Activated CD4-positive, alpha-beta memory T cell treated with anti-CD3 and anti-CD28 coated beads for 36 hours (primary cell): ENCODE measurements at regions of chr2 and their contacts with region 1.

Region 1: DNA sequence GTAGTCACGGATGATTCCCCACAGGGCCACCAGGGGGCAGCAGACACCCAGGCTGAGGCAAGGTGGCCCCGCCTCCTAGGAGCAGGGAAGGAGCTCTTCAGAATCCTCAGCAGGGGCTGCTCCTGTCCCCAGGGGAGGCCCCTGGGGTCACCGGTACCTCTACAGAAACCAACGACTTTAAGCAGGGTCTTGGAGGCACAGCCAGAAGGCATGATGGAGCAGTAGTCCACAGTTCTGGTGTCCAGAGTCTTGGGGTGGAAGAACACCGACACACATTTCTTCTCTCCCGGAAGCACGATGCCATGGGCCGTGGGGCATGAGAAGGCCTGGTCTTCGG is 11.5 kb downstream of the CFAP65 start:
- DNase-seq: peak; percentile 85
- H3K4me3 Mint-ChIP-seq: no peak overlapping the region
- H3K27ac Mint-ChIP-seq: no peak overlapping the region
- H3K4me1 Mint-ChIP-seq: no peaks in the 10 kb centered on the region
- H3K27me3 Mint-ChIP-seq: peaks cover 20% of the 10 kb centered on the region

Region 2: DNA sequence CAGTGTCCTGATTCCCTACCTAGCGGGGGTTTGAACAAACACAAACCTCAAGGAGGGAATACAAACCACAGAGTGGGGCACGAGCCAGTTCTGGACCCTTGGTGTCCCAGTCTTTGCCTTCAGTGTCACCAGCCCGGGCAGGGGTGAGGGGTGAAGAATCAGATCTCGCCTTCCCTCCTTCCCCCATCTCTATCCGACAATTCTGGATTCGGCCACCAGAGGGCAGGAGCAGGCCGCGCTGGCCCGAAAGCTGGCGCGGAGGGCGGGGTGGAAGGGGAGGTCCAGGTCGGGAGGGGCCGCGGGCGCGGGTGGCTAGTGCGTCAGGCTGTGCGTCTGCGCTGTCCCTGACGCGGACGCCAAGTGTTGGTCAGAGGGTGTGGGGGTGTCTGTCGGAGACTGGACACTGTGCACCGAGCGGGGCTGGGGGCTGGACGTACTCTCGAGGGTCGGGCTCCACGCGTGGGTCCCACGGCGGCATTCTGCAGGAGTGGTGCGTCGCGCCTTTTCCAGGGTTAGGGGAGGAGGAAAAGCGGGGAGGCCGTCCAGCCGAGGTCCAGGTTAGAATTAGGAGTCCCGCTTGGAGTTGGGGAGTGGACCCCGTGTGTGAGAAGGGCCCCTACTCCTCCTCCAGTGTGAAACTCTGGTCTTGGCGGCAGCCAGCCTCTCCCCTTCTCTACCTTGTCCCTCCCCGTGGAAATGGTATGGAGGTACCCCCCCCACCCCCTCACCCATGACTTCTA is 33.7 kb before region 1 on chr2:
- CTCF ChIA-PET with region 1: interaction called, 13 read pairs
- POLR2A ChIA-PET with region 1: interaction called, 3 read pairs
- intact Hi-C with region 1: no loop called
- DNase-seq: peak; percentile 86
- H3K4me3 Mint-ChIP-seq: no peak overlapping the region
- H3K27ac Mint-ChIP-seq: no peak overlapping the region
- H3K4me1 Mint-ChIP-seq: peaks cover 2% of the 10 kb centered on the region
- H3K27me3 Mint-ChIP-seq: peaks cover 73% of the 10 kb centered on the region

Region 3: DNA sequence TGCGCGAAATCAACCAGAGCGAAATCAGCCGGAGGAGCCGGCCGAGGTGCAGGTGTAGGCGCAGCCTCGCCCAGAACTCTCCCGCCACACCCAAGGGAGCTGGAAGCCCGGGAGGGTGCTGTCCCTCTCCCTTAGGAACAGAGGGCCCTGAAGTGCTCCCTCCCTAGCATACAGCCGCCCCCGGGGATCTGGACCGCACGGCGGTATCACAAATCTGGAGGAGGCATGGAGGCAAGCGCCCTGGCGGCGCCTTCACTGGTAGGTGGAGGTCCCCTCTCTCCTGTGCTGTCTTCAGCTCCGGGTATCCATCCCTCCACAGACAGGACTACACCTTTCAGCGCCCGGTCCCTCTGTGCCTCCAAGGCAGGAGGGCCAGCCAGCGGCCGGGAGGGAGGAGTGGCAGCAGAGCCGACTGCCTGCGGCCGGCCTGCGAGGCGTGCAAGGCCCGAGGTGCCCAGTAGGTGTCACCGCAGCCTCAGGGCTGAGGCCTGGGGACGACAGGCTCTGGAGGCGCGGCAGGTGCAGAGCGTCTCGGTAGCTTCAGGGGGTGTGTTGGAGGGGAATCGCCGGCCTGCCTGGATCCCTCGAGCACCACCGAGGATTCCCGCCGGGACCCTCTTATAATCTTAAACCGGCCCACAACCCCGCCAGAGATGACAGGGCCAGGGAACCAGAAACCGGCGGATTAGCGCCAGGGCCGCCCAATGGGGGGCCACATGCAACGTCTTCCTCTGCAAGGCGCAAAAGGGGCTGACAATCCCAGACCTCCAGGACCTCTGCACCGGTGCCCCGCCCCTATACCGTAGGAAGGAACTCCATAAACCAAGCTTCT is 28.1 kb after region 1 on chr2:
- CTCF ChIA-PET with region 1: interaction called, 22 read pairs
- POLR2A ChIA-PET with region 1: no interaction called
- intact Hi-C with region 1: no loop called
- DNase-seq: peak; percentile 87
- H3K4me3 Mint-ChIP-seq: peak overlapping the region; percentile 46
- H3K27ac Mint-ChIP-seq: no peak overlapping the region
- H3K4me1 Mint-ChIP-seq: peaks cover 26% of the 10 kb centered on the region
- H3K27me3 Mint-ChIP-seq: peaks cover 62% of the 10 kb centered on the region

Region 4: GRCh38 chr2:219104107-219105035 is 74.6 kb after region 1 on chr2:
- CTCF ChIA-PET with region 1: interaction called, 10 read pairs
- POLR2A ChIA-PET with region 1: no interaction called
- intact Hi-C with region 1: no loop called
- DNase-seq: peak; percentile 18
- H3K4me3 Mint-ChIP-seq: no peak overlapping the region
- H3K27ac Mint-ChIP-seq: peak overlapping the region; percentile 53
- H3K4me1 Mint-ChIP-seq: peaks cover 29% of the 10 kb centered on the region
- H3K27me3 Mint-ChIP-seq: no peaks in the 10 kb centered on the region

Region 5: GRCh38 chr2:219155054-219155644 is 125.4 kb after region 1 on chr2:
- CTCF ChIA-PET with region 1: interaction called, 48 read pairs
- POLR2A ChIA-PET with region 1: no interaction called
- intact Hi-C with region 1: loop called (anchors 1 kb)
- DNase-seq: peak; percentile 31
- H3K4me3 Mint-ChIP-seq: no peak overlapping the region
- H3K27ac Mint-ChIP-seq: no peak overlapping the region
- H3K4me1 Mint-ChIP-seq: peaks cover 8% of the 10 kb centered on the region
- H3K27me3 Mint-ChIP-seq: no peaks in the 10 kb centered on the region